Endothelial cell of umbilical vein (primary cell): ENCODE measurements at regions of chr1 and their contacts with region 1.

Region 1: GRCh38 chr1:221435504-221435904 is 306.4 kb downstream of the DUSP10 start:
- DNase-seq: peak; percentile 75
- H3K4me3 ChIP-seq: no peak overlapping the region
- H3K27ac ChIP-seq: peak overlapping the region; percentile 16
- H3K4me1 ChIP-seq: peaks cover 26% of the 10 kb centered on the region
- H3K27me3 ChIP-seq: no peaks in the 10 kb centered on the region
- CTCF ChIP-seq: peak; percentile 73 to 81
- POLR2A ChIP-seq: no peak

Region 2: DNA sequence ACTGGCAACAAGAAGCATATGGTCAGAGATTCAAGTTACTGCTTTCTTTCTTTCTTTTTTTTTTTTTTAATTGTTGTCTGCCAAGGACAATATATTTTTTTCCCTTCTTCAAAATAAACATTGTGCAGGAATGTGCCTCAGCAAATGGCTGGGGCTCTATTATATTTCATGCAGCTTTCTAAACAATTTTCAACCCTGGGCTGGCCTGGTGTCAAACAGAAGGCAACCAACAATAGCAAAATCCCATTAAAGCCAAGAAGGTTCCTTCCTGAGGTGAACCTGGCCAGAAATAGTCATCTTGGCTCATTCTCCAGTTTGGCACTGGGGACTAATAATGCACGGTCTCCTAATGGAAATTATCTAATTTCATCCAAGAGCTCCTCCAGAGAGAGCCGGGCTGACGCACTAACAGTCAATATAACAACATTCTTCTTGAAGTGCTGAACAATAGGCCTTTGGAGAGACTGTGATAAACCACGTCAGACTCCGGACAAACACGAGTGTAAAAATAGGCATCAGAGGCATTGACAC is 592.0 kb before region 1 on chr1:
- CTCF ChIA-PET with region 1: no interaction called
- POLR2A ChIA-PET with region 1: no interaction called
- dilution Hi-C with region 1: no loop called
- intact Hi-C with region 1: loop called (anchors 1 kb)
- DNase-seq: peak; percentile 99
- H3K4me3 ChIP-seq: no peak overlapping the region
- H3K27ac ChIP-seq: peak overlapping the region; percentile 65
- H3K4me1 ChIP-seq: peaks cover 13% of the 10 kb centered on the region
- H3K27me3 ChIP-seq: peaks cover 0 to 3% of the 10 kb centered on the region in 2 experiments
- CTCF ChIP-seq: no peak
- POLR2A ChIP-seq: no peak

Region 3: GRCh38 chr1:220990427-220991339 is 444.8 kb before region 1 on chr1:
- CTCF ChIA-PET with region 1: no interaction called
- POLR2A ChIA-PET with region 1: no interaction called
- dilution Hi-C with region 1: no loop called
- intact Hi-C with region 1: loop called (anchors 2 kb)
- DNase-seq: peak; percentile 82
- H3K4me3 ChIP-seq: no peak overlapping the region
- H3K27ac ChIP-seq: peak overlapping the region; percentile 24
- H3K4me1 ChIP-seq: peaks cover 15% of the 10 kb centered on the region
- H3K27me3 ChIP-seq: no peaks in the 10 kb centered on the region
- CTCF ChIP-seq: peak in 1 of 2 donors; percentile 17
- POLR2A ChIP-seq: no peak

Region 4: GRCh38 chr1:221263831-221264767 is 171.4 kb before region 1 on chr1:
- CTCF ChIA-PET with region 1: interaction called, 206 read pairs
- POLR2A ChIA-PET with region 1: interaction called, 3 read pairs
- dilution Hi-C with region 1: no loop called
- intact Hi-C with region 1: loop called (anchors 1 kb)
- DNase-seq: peak; percentile 79
- H3K4me3 ChIP-seq: no peak overlapping the region
- H3K27ac ChIP-seq: peak overlapping the region; percentile 34
- H3K4me1 ChIP-seq: peaks cover 7% of the 10 kb centered on the region
- H3K27me3 ChIP-seq: no peaks in the 10 kb centered on the region
- CTCF ChIP-seq: peak; percentile 64 to 71
- POLR2A ChIP-seq: no peak

Region 5: GRCh38 chr1:221411283-221411682 is 24.2 kb before region 1 on chr1:
- CTCF ChIA-PET with region 1: interaction called, 25 read pairs
- POLR2A ChIA-PET with region 1: no interaction called
- dilution Hi-C with region 1: no loop called
- intact Hi-C with region 1: loop called (anchors 1 kb)
- DNase-seq: peak; percentile 85
- H3K4me3 ChIP-seq: no peak overlapping the region
- H3K27ac ChIP-seq: peak overlapping the region; percentile 85
- H3K4me1 ChIP-seq: peaks cover 37% of the 10 kb centered on the region
- H3K27me3 ChIP-seq: peaks cover 0 to 6% of the 10 kb centered on the region in 2 experiments
- CTCF ChIP-seq: no peak
- POLR2A ChIP-seq: no peak

Region 6: DNA sequence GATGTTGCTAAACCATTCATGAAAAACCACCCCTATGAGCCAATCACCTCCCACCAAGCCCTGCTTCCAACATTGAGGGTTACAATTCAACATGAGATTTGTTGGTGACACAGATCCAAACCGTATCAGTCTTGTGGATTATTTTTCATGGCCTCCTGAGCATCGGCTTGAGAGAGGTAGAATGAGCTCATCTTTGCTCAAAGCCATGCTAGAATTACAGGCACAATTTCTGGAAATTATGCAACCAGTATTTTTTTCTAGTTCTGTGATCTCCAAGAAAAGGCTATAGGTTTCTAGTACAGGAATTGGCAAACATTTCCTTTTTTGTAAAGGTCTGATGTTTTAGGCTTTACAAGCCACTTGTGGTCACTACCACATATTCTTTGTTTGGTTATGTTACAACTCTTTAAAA is 87.0 kb after region 1 on chr1:
- CTCF ChIA-PET with region 1: no interaction called
- POLR2A ChIA-PET with region 1: no interaction called
- dilution Hi-C with region 1: no loop called
- intact Hi-C with region 1: no loop called
- DNase-seq: no peak
- H3K4me3 ChIP-seq: no peak overlapping the region
- H3K27ac ChIP-seq: no peak overlapping the region
- H3K4me1 ChIP-seq: no peaks in the 10 kb centered on the region
- H3K27me3 ChIP-seq: no peaks in the 10 kb centered on the region
- CTCF ChIP-seq: no peak
- POLR2A ChIP-seq: no peak

Region 7: GRCh38 chr1:221868593-221869303 is 433.2 kb after region 1 on chr1:
- CTCF ChIA-PET with region 1: no interaction called
- POLR2A ChIA-PET with region 1: no interaction called
- dilution Hi-C with region 1: no loop called
- intact Hi-C with region 1: loop called (anchors 5 kb)
- DNase-seq: peak; percentile 79
- H3K4me3 ChIP-seq: no peak overlapping the region
- H3K27ac ChIP-seq: peak overlapping the region; percentile 16
- H3K4me1 ChIP-seq: peaks cover 13% of the 10 kb centered on the region
- H3K27me3 ChIP-seq: peaks cover 0 to 2% of the 10 kb centered on the region in 2 experiments
- CTCF ChIP-seq: no peak
- POLR2A ChIP-seq: no peak